Right ventricle myocardium superior (tissue), 1 donor: ENCODE measurements at regions of chr2 and their contacts with region 1.

Region 1: DNA sequence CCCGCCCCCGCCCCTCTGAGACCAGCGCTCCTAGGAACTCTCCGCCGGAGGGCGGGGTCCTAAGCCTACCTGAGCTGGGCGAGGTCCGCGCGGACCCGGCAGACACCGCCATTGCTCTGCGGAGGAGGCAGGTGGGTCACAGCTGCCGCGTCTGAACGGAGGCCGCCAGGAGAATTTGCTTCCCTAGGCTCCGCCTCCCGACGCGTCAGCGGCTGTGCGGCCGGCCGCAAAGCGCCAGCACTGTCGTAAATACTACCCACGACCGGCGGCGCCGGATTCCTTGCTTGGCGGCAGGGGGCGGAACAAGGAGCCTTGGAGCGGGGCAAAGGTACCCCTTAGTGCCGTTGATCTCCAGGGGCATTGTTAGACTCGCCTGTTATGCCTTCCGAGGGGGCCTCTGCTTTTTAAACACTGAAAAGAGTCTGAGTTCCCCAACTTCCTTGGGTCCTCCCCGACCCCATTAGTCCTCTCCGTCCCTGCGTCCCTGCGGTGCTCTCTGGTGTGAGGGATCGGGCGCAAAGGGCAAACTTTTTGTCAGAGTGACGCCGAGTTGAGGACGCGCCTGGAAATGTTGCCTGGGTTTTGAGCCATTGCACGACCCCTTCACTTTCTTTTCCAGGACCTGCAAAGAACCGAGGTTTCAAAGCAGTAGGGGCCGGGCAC is at the start of gene GGCX:
- DNase-seq: peak; percentile 98
- ATAC-seq: peak; percentile 96
- total RNA-seq, gene GGCX: 25.1 TPM

Region 2: DNA sequence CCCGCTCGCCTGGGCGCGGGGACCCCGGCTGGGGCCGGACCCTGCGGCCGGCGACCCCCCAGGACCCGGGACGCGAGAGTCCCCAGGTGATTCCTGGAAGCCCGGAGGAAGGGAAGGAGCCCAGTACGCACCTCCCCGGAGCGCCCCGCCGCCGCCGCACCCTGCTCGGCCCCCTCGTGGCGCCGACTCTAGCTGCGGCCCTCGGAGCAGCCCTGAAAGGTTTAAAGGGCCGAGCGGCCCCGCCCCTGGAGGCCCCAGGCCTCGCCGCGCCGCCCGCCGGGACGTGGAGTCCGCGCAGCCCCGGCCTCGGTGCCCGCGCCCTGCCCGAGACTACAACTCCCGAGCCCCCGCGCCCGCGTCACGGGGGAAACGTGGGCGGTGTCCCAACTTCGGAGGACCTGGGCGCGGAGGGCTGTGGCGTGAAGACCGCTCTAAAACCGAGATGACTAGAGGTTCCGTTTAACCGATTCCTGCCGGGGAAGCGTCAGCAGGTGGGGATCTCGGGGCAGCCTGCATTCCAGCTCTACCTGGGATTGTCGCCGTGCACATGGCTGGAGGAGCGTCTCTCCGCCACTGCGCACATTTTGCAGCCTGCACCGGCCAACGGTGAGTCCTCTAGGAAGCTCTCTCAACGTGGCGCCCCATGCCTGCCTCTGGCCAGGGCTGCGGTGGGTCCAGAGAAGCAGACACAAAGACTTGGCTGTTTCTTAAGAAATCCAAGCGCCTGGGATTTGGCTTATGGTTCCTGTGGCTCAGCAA is 41.2 kb after region 1 on chr2 and contains the start of gene TMEM150A:
- intact Hi-C with region 1: loop called (anchors 2 kb)
- DNase-seq: peak; percentile 97
- ATAC-seq: peak; percentile 95
- total RNA-seq, gene TMEM150A: 9.5 TPM